Activated CD4-positive, alpha-beta T cell treated with anti-CD3 and anti-CD28 coated beads for 36 hours (primary cell): ENCODE measurements at regions of chr9 and their contacts with region 1.

Region 1: GRCh38 chr9:21985964-21986667 is 8.1 kb downstream of the CDKN2A start:
- DNase-seq: no peak
- ATAC-seq: no peak
- H3K4me3 Mint-ChIP-seq: no peak overlapping the region
- H3K27ac Mint-ChIP-seq: no peak overlapping the region
- H3K4me1 Mint-ChIP-seq: no peaks in the 10 kb centered on the region
- H3K27me3 Mint-ChIP-seq: peaks cover 65% of the 10 kb centered on the region

Region 2: DNA sequence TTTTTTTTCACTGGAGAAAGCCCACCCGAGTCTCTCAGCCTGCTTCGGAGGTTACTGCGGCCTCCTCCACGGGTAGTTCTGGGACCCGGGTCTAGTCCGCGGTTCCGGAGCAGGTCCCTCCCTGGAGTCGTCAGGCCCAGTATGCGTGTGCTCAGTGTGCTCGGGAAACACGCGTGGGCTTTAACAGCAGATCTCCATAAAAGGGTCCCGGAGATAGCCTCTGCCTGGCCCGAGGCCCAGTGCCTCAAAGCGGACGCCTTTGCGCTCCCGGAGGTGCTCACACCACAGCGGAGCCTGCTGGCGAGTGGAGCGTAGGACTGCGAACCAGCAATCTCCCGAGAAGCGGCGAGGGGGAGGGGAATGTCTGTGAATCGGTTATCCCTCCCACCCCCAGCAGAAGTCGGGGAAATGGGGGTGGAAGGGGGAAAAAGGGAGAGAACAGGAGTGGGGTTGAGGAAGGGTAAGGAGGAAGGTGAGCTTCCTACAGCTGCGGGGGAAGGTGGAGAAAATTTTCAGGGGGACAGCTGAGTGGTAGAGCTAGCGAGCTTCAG is 20.6 kb before region 1 on chr9:
- CTCF ChIA-PET with region 1: interaction called, 6 read pairs
- POLR2A ChIA-PET with region 1: no interaction called
- intact Hi-C with region 1: loop called (anchors 1 to 2 kb)
- DNase-seq: peak; percentile 75
- ATAC-seq: peak; percentile 84
- H3K4me3 Mint-ChIP-seq: peak overlapping the region; percentile 53
- H3K27ac Mint-ChIP-seq: peak overlapping the region; percentile 5
- H3K4me1 Mint-ChIP-seq: peaks cover 24% of the 10 kb centered on the region
- H3K27me3 Mint-ChIP-seq: peaks cover 85% of the 10 kb centered on the region

Region 3: DNA sequence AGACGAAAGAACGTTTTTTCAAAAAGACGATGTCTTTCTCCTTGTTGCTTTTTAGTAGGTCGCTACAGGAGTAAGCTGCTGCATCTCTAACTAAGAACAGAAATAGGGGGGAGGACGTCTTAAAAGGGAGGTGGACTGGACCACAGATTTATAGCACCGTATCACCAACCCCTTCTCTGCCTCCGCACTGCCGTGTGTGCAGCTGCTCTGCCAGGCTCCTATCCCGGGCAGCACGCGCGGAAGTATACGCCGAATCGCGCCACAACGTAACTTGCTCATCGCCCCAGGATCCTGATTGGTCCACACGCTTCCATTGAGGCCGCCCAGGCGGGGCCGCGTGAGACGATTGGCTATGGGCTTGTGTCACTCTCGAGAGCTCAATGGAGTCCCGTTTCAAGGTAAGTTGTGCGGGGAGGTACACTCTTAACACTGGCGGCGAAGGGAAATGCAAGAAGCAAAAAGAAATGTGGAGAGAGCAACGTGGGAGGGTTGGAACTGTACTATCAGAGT is 1840.1 kb after region 1 on chr9 and contains the start of gene ELAVL2:
- CTCF ChIA-PET with region 1: no interaction called
- POLR2A ChIA-PET with region 1: no interaction called
- intact Hi-C with region 1: loop called in 1 of 2 experiments (anchors 10 kb)
- DNase-seq: peak; percentile 54
- ATAC-seq: peak; percentile 78
- H3K4me3 Mint-ChIP-seq: no peak within 1 kb of the TSS
- H3K27ac Mint-ChIP-seq: no peak within 1 kb of the TSS
- H3K4me1 Mint-ChIP-seq: peaks cover under 1% of the 10 kb centered on the region
- H3K27me3 Mint-ChIP-seq: peaks cover 33% of the 10 kb centered on the region
- total RNA-seq, gene ELAVL2: not detected